ENCODE measurements at regions of chr2 and their contacts with region 1.

Region 1: GRCh38 chr2:10832203-10832936 is 19.8 kb upstream of the PDIA6 start:
- DNase-seq: peak; percentile 51 to 60
- ATAC-seq: peak; percentile 76 to 91
- H3K4me3 ChIP-seq: no peak overlapping the region
- H3K27ac ChIP-seq: no peak overlapping the region
- H3K4me1 ChIP-seq: peaks cover 0 to 4% of the 10 kb centered on the region in 2 donors
- H3K27me3 ChIP-seq: peaks cover 0 to 9% (median 5%) of the 10 kb centered on the region in 3 donors
- CTCF ChIP-seq: peak; percentile 87 to 98 (median 93)
- POLR2A ChIP-seq: no peak

Region 2: GRCh38 chr2:10859294-10859693 is 26.9 kb after region 1 on chr2:
- in situ Hi-C with region 1: no loop called
- intact Hi-C with region 1: no loop called
- DNase-seq: no peak
- ATAC-seq: no peak
- H3K4me3 ChIP-seq: no peak overlapping the region
- H3K27ac ChIP-seq: no peak overlapping the region
- H3K4me1 ChIP-seq: peaks cover 0 to 7% of the 10 kb centered on the region in 2 donors
- H3K27me3 ChIP-seq: no peaks in the 10 kb centered on the region
- CTCF ChIP-seq: no peak
- POLR2A ChIP-seq: no peak

Region 3: DNA sequence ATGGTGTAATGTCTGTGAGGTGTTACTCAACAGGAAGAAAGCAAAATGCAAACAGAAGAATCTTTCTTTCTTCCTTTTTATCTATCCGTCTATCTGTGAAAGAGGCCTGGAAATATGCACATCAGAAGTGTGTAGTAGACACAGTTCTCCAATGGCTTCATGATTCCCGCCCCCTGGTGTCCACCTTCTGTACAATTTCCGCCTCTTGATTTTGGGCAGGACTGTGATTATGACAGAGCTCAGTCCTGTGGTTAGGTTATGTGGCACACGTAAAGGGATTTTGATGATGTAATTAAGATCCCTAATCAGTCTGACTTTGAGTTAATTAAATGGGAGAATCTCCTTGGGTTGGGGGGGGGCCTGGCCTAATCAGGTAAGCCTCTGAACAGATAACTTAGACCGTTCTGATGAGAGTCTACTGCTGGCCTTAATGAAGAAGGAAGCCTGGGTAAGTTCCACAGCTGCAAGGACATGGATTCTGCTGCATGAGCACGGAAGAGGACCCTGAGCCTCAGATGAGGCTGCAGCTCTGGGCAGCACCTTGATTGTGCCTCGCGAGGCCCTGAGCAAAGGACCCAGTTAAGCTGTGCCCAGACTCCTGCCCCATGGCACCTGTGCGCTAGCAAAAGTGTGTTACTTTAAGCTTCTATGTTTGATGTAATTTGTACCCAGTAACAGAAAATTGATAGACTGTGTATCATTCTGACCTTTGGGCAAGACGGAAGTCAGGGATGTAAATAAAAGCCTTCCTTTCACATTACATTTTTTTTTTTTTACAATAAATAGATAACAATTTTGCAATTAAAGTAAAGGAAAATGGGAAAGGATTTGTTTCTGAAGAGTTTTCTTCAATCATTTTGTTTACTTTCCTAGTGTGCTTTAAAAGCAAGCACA is 68.1 kb after region 1 on chr2:
- in situ Hi-C with region 1: no loop called
- intact Hi-C with region 1: loop called (anchors 2 kb)
- DNase-seq: no peak
- ATAC-seq: no peak
- H3K4me3 ChIP-seq: no peak overlapping the region
- H3K27ac ChIP-seq: no peak overlapping the region
- H3K4me1 ChIP-seq: no peaks in the 10 kb centered on the region
- H3K27me3 ChIP-seq: no peaks in the 10 kb centered on the region
- CTCF ChIP-seq: peak in 2 of 5 experiments; percentile 15 to 21
- POLR2A ChIP-seq: no peak

Region 4: DNA sequence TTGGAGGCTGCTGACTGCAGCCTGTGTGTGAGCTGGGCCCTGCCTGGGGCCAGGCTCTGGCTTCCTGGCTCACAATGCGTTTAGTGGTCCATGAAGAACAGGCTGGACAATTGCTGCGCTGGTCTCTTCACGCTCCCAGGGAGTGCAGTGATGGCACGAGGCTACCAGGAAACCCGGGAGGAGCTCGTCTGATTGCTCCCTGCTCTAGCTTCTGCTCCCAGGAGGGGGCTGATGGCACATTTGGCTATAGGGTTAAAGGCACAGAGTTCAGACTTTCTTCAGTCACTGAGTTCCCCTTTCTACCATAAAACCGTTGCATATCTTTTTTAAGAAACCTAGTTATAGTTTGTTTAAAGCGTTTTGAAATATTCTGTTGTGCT is 139.5 kb after region 1 on chr2:
- in situ Hi-C with region 1: no loop called
- intact Hi-C with region 1: no loop called
- DNase-seq: no peak
- ATAC-seq: no peak
- H3K4me3 ChIP-seq: no peak overlapping the region
- H3K27ac ChIP-seq: no peak overlapping the region
- H3K4me1 ChIP-seq: no peaks in the 10 kb centered on the region
- H3K27me3 ChIP-seq: peaks cover 0 to 4% (median 2%) of the 10 kb centered on the region in 3 donors
- CTCF ChIP-seq: no peak
- POLR2A ChIP-seq: no peak

Region 5: GRCh38 chr2:11124503-11125068 is 292.2 kb after region 1 on chr2:
- in situ Hi-C with region 1: loop called in 3 of 4 experiments (anchors 5 kb)
- intact Hi-C with region 1: loop called (anchors 1 kb)
- DNase-seq: peak in 1 of 2 donors; percentile 43
- ATAC-seq: peak in 1 of 2 donors; percentile 48
- H3K4me3 ChIP-seq: no peak overlapping the region
- H3K27ac ChIP-seq: no peak overlapping the region
- H3K4me1 ChIP-seq: no peaks in the 10 kb centered on the region
- H3K27me3 ChIP-seq: no peaks in the 10 kb centered on the region
- CTCF ChIP-seq: peak; percentile 49 to 75 (median 63)
- POLR2A ChIP-seq: no peak

Region 6: GRCh38 chr2:11329781-11330180 is 497.4 kb after region 1 on chr2:
- in situ Hi-C with region 1: no loop called
- intact Hi-C with region 1: no loop called
- DNase-seq: no peak
- ATAC-seq: peak in 1 of 2 donors; percentile 31
- H3K4me3 ChIP-seq: peak overlapping the region in 1 of 4 donors; percentile 5
- H3K27ac ChIP-seq: peak overlapping the region; percentile 64 to 69 (median 65)
- H3K4me1 ChIP-seq: peaks cover 53 to 80% of the 10 kb centered on the region in 2 donors
- H3K27me3 ChIP-seq: no peaks in the 10 kb centered on the region
- CTCF ChIP-seq: no peak
- POLR2A ChIP-seq: no peak

Region 7: DNA sequence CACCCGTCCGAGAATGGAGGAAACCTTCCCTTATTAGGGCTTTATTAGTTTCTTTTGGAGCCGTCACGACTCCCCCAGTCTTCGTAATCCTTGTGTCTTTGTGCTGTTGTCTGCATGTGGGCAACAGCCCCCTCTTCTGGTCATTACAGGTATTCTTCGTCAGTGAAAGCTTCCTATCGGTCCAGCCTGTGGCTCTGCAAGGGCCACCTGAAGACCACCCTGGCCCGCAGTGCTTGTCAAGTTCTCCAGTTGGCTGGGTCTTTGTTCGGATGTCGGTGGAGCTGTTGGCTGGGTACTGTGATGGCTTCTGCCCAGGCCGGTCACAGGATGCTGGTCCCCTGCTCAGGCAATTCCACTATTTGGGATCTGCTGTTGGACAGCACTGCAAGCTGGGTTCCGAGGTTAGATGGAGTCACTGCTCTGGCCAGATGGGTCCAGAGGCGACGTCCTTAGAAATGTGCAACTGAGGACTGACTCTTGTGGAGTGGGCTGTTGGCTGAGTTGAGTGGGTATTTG is 614.4 kb after region 1 on chr2:
- in situ Hi-C with region 1: loop called in 1 of 4 experiments (anchors 25 kb)
- intact Hi-C with region 1: no loop called
- DNase-seq: peak; percentile 21 to 54
- ATAC-seq: peak; percentile 73 to 84
- H3K4me3 ChIP-seq: no peak overlapping the region
- H3K27ac ChIP-seq: peak overlapping the region in 3 of 4 donors; percentile 13 to 55 (median 51)
- H3K4me1 ChIP-seq: no peaks in the 10 kb centered on the region
- H3K27me3 ChIP-seq: no peaks in the 10 kb centered on the region
- CTCF ChIP-seq: peak; percentile 74 to 91 (median 87)
- POLR2A ChIP-seq: no peak

Measured in gastrocnemius medialis (tissue), 4 donors.